ENCODE measurements at regions of chr7 and their contacts with region 1.

Region 1: GRCh38 chr7:29636009-29636351 is 72.3 kb downstream of the PRR15 start:
- DNase-seq: no peak
- H3K4me3 ChIP-seq: no peak overlapping the region
- H3K4me3 Mint-ChIP-seq: no peak overlapping the region
- H3K27ac ChIP-seq: no peak overlapping the region
- H3K27ac Mint-ChIP-seq: no peak overlapping the region
- H3K4me1 ChIP-seq: no peaks in the 10 kb centered on the region
- H3K4me1 Mint-ChIP-seq: no peaks in the 10 kb centered on the region
- H3K27me3 ChIP-seq: no peaks in the 10 kb centered on the region
- H3K27me3 Mint-ChIP-seq: peaks cover 0 to 5% (median 2%) of the 10 kb centered on the region in 3 donors
- CTCF ChIP-seq: peak; percentile 15

Region 2: GRCh38 chr7:29684787-29685650 is 49.0 kb after region 1 on chr7:
- intact Hi-C with region 1: no loop called
- DNase-seq: peak; percentile 30 to 51 (median 48)
- H3K4me3 ChIP-seq: peak overlapping the region; percentile 40 to 82 (median 75)
- H3K4me3 Mint-ChIP-seq: peak overlapping the region; percentile 92 to 99
- H3K27ac ChIP-seq: peak overlapping the region in 1 of 2 donors; percentile 58
- H3K27ac Mint-ChIP-seq: peak overlapping the region in 3 of 7 donors; percentile 48 to 82 (median 60)
- H3K4me1 ChIP-seq: peaks cover 8% of the 10 kb centered on the region in 2 donors
- H3K4me1 Mint-ChIP-seq: peaks cover 26% of the 10 kb centered on the region
- H3K27me3 ChIP-seq: no peaks in the 10 kb centered on the region
- H3K27me3 Mint-ChIP-seq: no peaks in the 10 kb centered on the region
- CTCF ChIP-seq: no peak

Region 3: GRCh38 chr7:29748286-29749108 is 112.5 kb after region 1 on chr7:
- intact Hi-C with region 1: loop called in 1 of 2 experiments (anchors 5 kb)
- DNase-seq: peak in 1 of 3 donors; percentile 0
- H3K4me3 ChIP-seq: no peak overlapping the region
- H3K4me3 Mint-ChIP-seq: no peak overlapping the region
- H3K27ac ChIP-seq: no peak overlapping the region
- H3K27ac Mint-ChIP-seq: no peak overlapping the region
- H3K4me1 ChIP-seq: no peaks in the 10 kb centered on the region
- H3K4me1 Mint-ChIP-seq: no peaks in the 10 kb centered on the region
- H3K27me3 ChIP-seq: no peaks in the 10 kb centered on the region
- H3K27me3 Mint-ChIP-seq: peaks cover 0 to 2% (median 2%) of the 10 kb centered on the region in 3 donors
- CTCF ChIP-seq: peak; percentile 63

Region 4: GRCh38 chr7:30159698-30160143 is 523.7 kb after region 1 on chr7:
- intact Hi-C with region 1: no loop called
- DNase-seq: peak; percentile 75 to 83 (median 80)
- H3K4me3 ChIP-seq: peak overlapping the region in 1 of 3 experiments; percentile 29
- H3K4me3 Mint-ChIP-seq: peak overlapping the region; percentile 41 to 77
- H3K27ac ChIP-seq: peak overlapping the region; percentile 61 to 68
- H3K27ac Mint-ChIP-seq: peak overlapping the region; percentile 2 to 82 (median 73)
- H3K4me1 ChIP-seq: peaks cover 49% of the 10 kb centered on the region in 2 donors
- H3K4me1 Mint-ChIP-seq: peaks cover 68% of the 10 kb centered on the region
- H3K27me3 ChIP-seq: no peaks in the 10 kb centered on the region
- H3K27me3 Mint-ChIP-seq: peaks cover 0 to 1% (median 0%) of the 10 kb centered on the region in 3 donors
- CTCF ChIP-seq: no peak

Region 5: DNA sequence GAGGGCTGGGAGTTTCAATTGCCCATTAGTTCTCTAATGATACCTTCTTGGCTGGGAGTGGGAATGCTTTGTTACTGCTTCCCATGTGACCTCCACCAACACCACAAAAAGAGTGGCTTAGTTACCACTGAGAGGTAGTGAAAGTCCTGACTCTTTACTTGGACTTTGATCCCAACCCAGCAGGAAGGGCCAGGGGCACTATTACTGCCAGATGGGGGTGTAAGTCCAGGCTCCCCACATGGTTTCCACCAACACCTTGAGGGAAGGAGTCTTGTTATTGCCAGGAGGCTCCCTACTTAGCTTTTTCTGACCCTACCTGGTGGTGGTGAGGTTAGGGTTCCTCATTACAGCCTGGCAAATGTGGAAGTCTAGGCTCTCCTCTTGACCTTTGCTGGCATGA is 857.2 kb after region 1 on chr7:
- intact Hi-C with region 1: no loop called
- DNase-seq: no peak
- H3K4me3 ChIP-seq: no peak overlapping the region
- H3K4me3 Mint-ChIP-seq: no peak overlapping the region
- H3K27ac ChIP-seq: no peak overlapping the region
- H3K27ac Mint-ChIP-seq: no peak overlapping the region
- H3K4me1 ChIP-seq: no peaks in the 10 kb centered on the region
- H3K4me1 Mint-ChIP-seq: no peaks in the 10 kb centered on the region
- H3K27me3 ChIP-seq: no peaks in the 10 kb centered on the region
- H3K27me3 Mint-ChIP-seq: peaks cover 0 to 1% (median 0%) of the 10 kb centered on the region in 3 donors
- CTCF ChIP-seq: no peak

Region 6: GRCh38 chr7:31134246-31135188 is 1498.5 kb after region 1 on chr7:
- intact Hi-C with region 1: no loop called
- DNase-seq: peak; percentile 9 to 40 (median 32)
- H3K4me3 ChIP-seq: no peak overlapping the region
- H3K4me3 Mint-ChIP-seq: peak overlapping the region in 1 of 2 donors; percentile 58
- H3K27ac ChIP-seq: no peak overlapping the region
- H3K27ac Mint-ChIP-seq: no peak overlapping the region
- H3K4me1 ChIP-seq: no peaks in the 10 kb centered on the region
- H3K4me1 Mint-ChIP-seq: peaks cover 4% of the 10 kb centered on the region
- H3K27me3 ChIP-seq: no peaks in the 10 kb centered on the region
- H3K27me3 Mint-ChIP-seq: peaks cover 2 to 7% (median 3%) of the 10 kb centered on the region in 3 donors
- CTCF ChIP-seq: peak; percentile 80